ENCODE measurements at regions of chr10 and their contacts with region 1.

Region 1: DNA sequence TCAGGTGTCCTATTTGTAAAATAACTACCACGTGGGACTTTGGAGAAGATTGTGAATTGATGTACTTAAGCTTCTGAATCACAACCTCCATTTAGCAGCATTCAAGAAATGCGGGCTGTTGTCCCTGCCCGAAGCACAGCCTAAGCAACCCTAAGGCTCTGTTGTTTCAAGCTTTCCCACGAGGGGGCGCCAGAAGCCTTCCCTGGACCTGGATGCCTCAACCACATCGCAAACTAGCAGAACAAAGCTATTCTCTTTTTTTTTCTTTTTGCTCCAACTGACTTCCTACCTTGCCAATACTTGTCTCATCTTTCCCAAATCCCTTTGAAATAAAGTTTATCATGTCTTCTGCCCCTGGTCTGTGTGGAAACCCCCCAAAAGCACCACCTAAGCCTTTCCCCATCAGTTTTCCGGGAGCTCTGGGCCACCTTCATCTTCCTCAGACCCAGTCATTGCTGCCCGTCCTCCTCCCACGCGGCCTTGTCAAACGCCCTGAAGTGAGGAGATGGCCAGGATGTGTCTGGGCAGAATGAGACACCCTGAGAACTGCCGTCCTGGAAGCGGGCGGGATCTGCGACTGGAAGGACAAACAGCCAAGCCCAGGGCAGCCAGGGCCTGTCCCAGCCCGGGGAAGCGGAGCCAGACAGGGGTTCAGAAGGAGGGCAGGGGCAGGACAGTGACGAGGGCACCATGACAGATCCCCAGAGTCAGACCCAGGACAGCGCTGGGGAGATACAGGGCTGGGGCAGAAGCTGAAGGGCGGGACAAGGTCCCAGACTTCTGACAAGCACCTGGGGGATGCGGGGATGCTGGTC is 112.7 kb downstream of the SLIT1 start:
- DNase-seq: peak; percentile 58
- H3K4me3 ChIP-seq: no peak overlapping the region
- H3K27ac ChIP-seq: no peak overlapping the region
- H3K4me1 ChIP-seq: no peaks in the 10 kb centered on the region
- H3K27me3 ChIP-seq: no peaks in the 10 kb centered on the region
- CTCF ChIP-seq: peak; percentile 91 to 93

Region 2: GRCh38 chr10:96960872-96961271 is 112.2 kb before region 1 on chr10:
- CTCF ChIA-PET with region 1: interaction called, 11 read pairs
- dilution Hi-C with region 1: no loop called
- in situ Hi-C with region 1: no loop called
- intact Hi-C with region 1: no loop called
- DNase-seq: no peak
- H3K4me3 ChIP-seq: no peak overlapping the region
- H3K27ac ChIP-seq: no peak overlapping the region
- H3K4me1 ChIP-seq: no peaks in the 10 kb centered on the region
- H3K27me3 ChIP-seq: no peaks in the 10 kb centered on the region
- CTCF ChIP-seq: no peak

Region 3: GRCh38 chr10:97117372-97117771 is 44.3 kb after region 1 on chr10:
- CTCF ChIA-PET with region 1: no interaction called
- dilution Hi-C with region 1: no loop called
- in situ Hi-C with region 1: no loop called
- intact Hi-C with region 1: loop called (anchors 1 kb)
- DNase-seq: peak; percentile 10
- H3K4me3 ChIP-seq: no peak overlapping the region
- H3K27ac ChIP-seq: no peak overlapping the region
- H3K4me1 ChIP-seq: no peaks in the 10 kb centered on the region
- H3K27me3 ChIP-seq: peaks cover 5% of the 10 kb centered on the region
- CTCF ChIP-seq: peak; percentile 28 to 43

Region 4: GRCh38 chr10:97196223-97197029 is 123.4 kb after region 1 on chr10:
- CTCF ChIA-PET with region 1: no interaction called
- dilution Hi-C with region 1: no loop called
- in situ Hi-C with region 1: loop called (anchors 10 to 25 kb)
- intact Hi-C with region 1: loop called (anchors 5 kb)
- DNase-seq: peak; percentile 23
- H3K4me3 ChIP-seq: peak overlapping the region; percentile 2 to 36 (median 31)
- H3K27ac ChIP-seq: no peak overlapping the region
- H3K4me1 ChIP-seq: no peaks in the 10 kb centered on the region
- H3K27me3 ChIP-seq: no peaks in the 10 kb centered on the region
- CTCF ChIP-seq: peak; percentile 58 to 73

Region 5: DNA sequence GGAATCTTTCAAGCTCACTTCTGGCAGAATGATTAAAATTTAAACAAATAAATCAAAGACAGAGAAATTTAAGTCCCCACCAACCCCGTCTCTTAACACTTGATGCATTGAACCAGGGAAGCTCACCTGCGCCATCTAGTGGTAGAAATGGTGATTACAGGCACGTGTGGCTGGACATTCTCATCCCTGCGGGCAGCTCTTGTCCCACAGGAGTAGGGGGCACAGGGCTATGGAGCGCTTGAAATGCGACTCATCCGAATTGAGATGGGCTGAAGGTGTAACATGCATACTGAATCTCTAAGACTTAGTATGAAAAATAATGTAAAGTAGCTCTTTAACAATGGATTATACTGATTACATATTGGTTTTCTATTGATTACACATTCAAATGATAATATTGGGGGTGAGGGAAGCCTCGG is 137.5 kb after region 1 on chr10:
- CTCF ChIA-PET with region 1: interaction called, 8 read pairs
- dilution Hi-C with region 1: no loop called
- in situ Hi-C with region 1: loop called (anchors 10 to 25 kb)
- intact Hi-C with region 1: loop called (anchors 1 kb)
- DNase-seq: peak; percentile 40
- H3K4me3 ChIP-seq: no peak overlapping the region
- H3K27ac ChIP-seq: no peak overlapping the region
- H3K4me1 ChIP-seq: no peaks in the 10 kb centered on the region
- H3K27me3 ChIP-seq: no peaks in the 10 kb centered on the region
- CTCF ChIP-seq: peak; percentile 94 to 97

Region 6: DNA sequence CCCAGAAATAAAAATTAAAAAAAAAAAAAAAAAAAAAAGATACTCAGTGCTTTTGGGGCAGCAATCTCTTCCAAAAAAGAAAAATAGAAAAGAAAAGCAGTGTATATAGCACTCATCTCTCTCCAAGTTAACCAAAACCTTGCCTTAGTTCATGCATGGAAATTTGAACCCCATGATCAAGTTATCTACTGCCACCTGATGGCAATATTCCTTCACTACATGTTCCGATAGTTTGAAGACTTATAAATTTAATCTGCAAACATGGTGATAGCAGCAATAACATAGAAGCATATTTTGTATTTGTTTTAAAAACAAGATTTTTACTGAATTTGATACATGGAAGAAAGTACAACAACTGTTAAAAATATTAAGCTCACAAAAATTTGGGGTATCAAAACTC is 161.3 kb after region 1 on chr10:
- CTCF ChIA-PET with region 1: interaction called, 5 read pairs
- dilution Hi-C with region 1: no loop called
- in situ Hi-C with region 1: no loop called
- intact Hi-C with region 1: loop called (anchors 1 kb)
- DNase-seq: peak; percentile 19
- H3K4me3 ChIP-seq: no peak overlapping the region
- H3K27ac ChIP-seq: no peak overlapping the region
- H3K4me1 ChIP-seq: no peaks in the 10 kb centered on the region
- H3K27me3 ChIP-seq: no peaks in the 10 kb centered on the region
- CTCF ChIP-seq: peak; percentile 50 to 57

Region 7: DNA sequence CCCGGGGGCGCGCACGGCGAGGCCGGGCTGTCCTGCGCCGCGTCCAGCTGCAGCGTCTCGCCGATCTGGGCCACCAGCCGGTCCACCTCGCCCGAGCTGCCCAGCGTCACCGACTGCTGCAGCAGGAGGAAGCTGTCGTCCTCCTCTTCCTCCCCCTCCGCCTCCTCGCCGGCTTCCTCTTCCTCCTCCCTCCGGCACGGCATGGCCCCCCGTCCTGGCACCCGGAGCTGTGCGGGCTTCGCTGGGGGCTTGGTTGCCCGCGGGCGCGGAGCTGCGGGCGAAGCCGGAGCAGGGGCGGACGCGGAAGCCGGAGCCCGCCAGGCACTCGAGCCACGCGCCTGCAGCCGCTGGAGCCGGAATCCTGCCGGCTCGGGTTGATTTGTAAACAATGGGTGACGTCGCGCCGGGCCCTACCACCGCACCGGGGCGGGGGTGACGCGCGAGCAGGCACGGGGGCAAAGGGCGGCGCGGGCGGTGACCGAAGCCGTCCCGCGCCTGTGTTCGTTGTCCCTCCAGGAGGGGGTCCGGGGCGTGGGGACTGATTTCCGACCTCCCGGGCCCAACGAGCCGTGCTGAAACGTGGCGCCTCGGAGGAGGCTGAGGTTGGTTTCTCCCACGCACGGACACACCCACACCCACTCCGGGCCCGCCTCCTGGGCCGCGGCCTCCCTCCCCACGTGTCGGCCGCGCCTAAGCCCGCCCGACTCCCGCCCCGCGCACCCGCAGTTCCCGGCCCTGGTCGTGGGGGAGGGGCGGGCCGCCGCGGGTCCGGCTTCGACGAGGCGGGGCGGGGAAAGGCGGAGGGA is 261.5 kb after region 1 on chr10 and contains the start of gene FRAT2:
- CTCF ChIA-PET with region 1: no interaction called
- dilution Hi-C with region 1: no loop called
- in situ Hi-C with region 1: no loop called
- intact Hi-C with region 1: loop called (anchors 1 kb)
- DNase-seq: peak; percentile 86
- H3K4me3 ChIP-seq: peak within 1 kb of the TSS; percentile 66 to 82 (median 78)
- H3K27ac ChIP-seq: peak within 1 kb of the TSS; percentile 94
- H3K4me1 ChIP-seq: peaks cover 20% of the 10 kb centered on the region
- H3K27me3 ChIP-seq: no peaks in the 10 kb centered on the region
- CTCF ChIP-seq: no peak
- total RNA-seq, gene FRAT2: 5.0 to 5.3 TPM

Region 8: DNA sequence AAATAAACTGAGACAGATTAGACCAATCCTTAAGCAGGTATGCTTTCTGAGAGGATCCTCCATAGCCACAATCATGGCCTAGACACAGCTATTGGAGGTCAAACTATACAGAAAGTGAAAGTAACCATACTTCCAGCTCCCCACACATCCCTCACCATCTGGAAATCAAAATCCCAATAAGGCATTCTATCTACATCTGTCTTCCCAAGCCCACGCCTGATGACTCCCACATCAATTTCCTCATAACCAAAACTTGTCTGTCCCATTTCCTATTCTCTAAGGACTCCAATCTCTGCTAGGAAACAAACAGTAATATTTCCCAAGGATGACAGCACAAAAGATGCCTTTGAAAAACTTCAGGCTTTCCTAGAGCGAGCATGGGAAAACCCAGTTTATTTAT is 1621.0 kb after region 1 on chr10:
- CTCF ChIA-PET with region 1: no interaction called
- dilution Hi-C with region 1: no loop called
- in situ Hi-C with region 1: no loop called
- intact Hi-C with region 1: no loop called
- DNase-seq: no peak
- H3K4me3 ChIP-seq: no peak overlapping the region
- H3K27ac ChIP-seq: no peak overlapping the region
- H3K4me1 ChIP-seq: no peaks in the 10 kb centered on the region
- H3K27me3 ChIP-seq: no peaks in the 10 kb centered on the region
- CTCF ChIP-seq: no peak

Measured in mammary epithelial cell (primary cell).